Caco-2 (cell line): ENCODE measurements at regions of chr13 and their contacts with region 1.

Region 1: GRCh38 chr13:113296842-113297369 is at the start of gene LAMP1:
- DNase-seq: peak; percentile 99 to 100
- H3K4me3 ChIP-seq: peak within 1 kb of the TSS; percentile 53
- H3K4me3 Mint-ChIP-seq: peak within 1 kb of the TSS; percentile 81
- H3K27ac Mint-ChIP-seq: peak within 1 kb of the TSS; percentile 82
- H3K4me1 ChIP-seq: peaks cover 8% of the 10 kb centered on the region
- H3K4me1 Mint-ChIP-seq: peaks cover 15% of the 10 kb centered on the region
- H3K27me3 ChIP-seq: no peaks in the 10 kb centered on the region
- H3K27me3 Mint-ChIP-seq: no peaks in the 10 kb centered on the region
- CTCF ChIP-seq: peak in 1 of 2 experiments; percentile 5
- total RNA-seq, gene LAMP1: 244 and 245 TPM in 2 replicates

Region 2: GRCh38 chr13:113364311-113364889 is 67.5 kb after region 1 on chr13:
- CTCF ChIA-PET with region 1: interaction called, 5 read pairs
- POLR2A ChIA-PET with region 1: interaction called, 3 read pairs
- intact Hi-C with region 1: loop called (anchors 5 kb)
- DNase-seq: no peak
- H3K4me3 ChIP-seq: no peak overlapping the region
- H3K4me3 Mint-ChIP-seq: no peak overlapping the region
- H3K27ac Mint-ChIP-seq: no peak overlapping the region
- H3K4me1 ChIP-seq: no peaks in the 10 kb centered on the region
- H3K4me1 Mint-ChIP-seq: peaks cover 8% of the 10 kb centered on the region
- H3K27me3 ChIP-seq: no peaks in the 10 kb centered on the region
- H3K27me3 Mint-ChIP-seq: no peaks in the 10 kb centered on the region
- CTCF ChIP-seq: no peak